IMR-90 (cell line): ENCODE measurements at regions of chr7 and their contacts with region 1.

Region 1: DNA sequence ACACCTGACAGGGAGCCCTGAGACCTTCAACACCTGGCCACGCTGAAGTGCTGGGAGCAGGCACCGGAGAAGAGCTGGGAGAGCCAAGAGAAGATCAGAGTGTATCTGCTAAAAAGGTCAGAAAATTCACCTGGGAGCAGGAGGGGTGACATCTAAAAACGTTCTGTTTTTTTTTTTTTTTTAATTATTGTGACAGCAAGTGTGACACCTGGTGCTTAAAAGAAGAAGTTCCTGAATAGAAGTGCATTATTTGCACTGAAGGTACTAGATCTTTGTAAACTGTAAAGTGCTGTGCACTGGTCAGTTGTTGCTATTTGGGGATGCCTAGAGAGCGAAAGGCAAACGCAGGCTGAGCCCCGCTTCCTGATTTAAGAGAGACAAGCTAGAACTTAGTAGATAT is 422.0 kb downstream of the PLXNA4 start:
- DNase-seq: no peak
- ATAC-seq: no peak
- H3K4me3 ChIP-seq: no peak overlapping the region
- H3K27ac ChIP-seq: no peak overlapping the region
- H3K4me1 ChIP-seq: no peaks in the 10 kb centered on the region
- H3K27me3 ChIP-seq: peaks cover 2% of the 10 kb centered on the region; the same call in 1 of the 2 replicates
- CTCF ChIP-seq: no peak
- POLR2A ChIP-seq: no peak
- RAD21 ChIP-seq: no peak

Region 2: GRCh38 chr7:132134814-132135445 is 19.3 kb before region 1 on chr7:
- CTCF ChIA-PET with region 1: no interaction called
- POLR2A ChIA-PET with region 1: no interaction called
- dilution Hi-C with region 1: no loop called
- in situ Hi-C with region 1: no loop called
- intact Hi-C with region 1: loop called (anchors 1 kb)
- DNase-seq: no peak
- ATAC-seq: no peak
- H3K4me3 ChIP-seq: no peak overlapping the region
- H3K27ac ChIP-seq: no peak overlapping the region
- H3K4me1 ChIP-seq: no peaks in the 10 kb centered on the region
- H3K27me3 ChIP-seq: no peaks in the 10 kb centered on the region; the same call in 1 of the 2 replicates
- CTCF ChIP-seq: no peak
- POLR2A ChIP-seq: no peak
- RAD21 ChIP-seq: no peak